OCI-LY7 (cell line): ENCODE measurements at regions of chr15 and their contacts with region 1.

Region 1: DNA sequence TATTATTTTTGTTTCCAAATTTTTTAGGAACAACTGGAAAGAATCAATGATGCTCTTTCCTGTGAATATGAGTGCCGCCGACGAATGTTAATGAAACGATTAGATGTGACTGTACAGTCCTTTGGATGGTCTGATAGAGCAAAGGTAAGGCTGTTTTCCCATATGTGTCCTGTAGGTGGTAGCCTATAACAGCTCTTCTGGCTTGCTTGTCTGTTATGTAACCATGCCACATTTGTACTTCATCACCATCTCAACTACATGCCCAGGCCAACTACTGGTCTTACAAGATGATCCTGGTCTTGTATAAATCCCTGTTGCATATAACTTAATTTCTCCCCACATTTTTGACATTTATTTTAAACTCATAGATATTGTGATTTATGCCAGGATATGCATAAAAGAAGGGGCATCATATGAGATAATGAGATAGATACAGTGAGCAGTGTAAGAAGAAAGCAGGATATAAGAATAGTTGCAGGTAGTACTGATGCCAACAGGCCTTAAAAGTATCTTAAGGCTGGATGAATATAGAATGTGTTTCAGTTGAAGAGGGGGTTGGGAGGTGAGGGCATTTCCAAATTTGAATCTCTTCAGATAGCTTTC is 20.3 kb downstream of the FAM98B start:
- DNase-seq: peak; percentile 72
- H3K4me3 ChIP-seq: no peak overlapping the region
- H3K27ac ChIP-seq: no peak overlapping the region
- H3K4me1 ChIP-seq: no peaks in the 10 kb centered on the region
- CTCF ChIP-seq: peak; percentile 86

Region 2: DNA sequence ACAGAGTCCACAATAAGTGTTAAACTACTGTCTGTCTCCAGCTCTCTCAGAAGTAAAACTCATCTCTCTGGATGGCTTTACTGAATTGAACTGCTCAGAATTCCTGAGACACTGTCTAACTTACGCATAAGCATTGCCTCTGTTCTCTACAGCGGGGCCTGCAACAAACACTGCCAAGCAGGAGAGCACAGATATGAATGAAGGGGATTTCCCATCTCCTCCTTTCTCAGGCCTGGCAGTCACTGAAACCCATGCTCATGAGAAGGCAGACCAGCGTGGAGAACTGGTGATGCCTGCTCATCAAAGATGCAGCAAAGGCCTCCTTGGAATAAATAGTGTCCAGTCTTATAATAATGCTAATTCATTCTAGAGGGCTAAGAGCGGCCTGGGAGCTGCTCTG is 80.1 kb after region 1 on chr15:
- CTCF ChIA-PET with region 1: no interaction called
- POLR2A ChIA-PET with region 1: no interaction called
- intact Hi-C with region 1: loop called (anchors 5 kb)
- DNase-seq: no peak
- H3K4me3 ChIP-seq: no peak overlapping the region
- H3K27ac ChIP-seq: no peak overlapping the region
- H3K4me1 ChIP-seq: no peaks in the 10 kb centered on the region
- CTCF ChIP-seq: no peak

Region 3: GRCh38 chr15:38589502-38589901 is 115.2 kb after region 1 on chr15:
- CTCF ChIA-PET with region 1: no interaction called
- POLR2A ChIA-PET with region 1: no interaction called
- intact Hi-C with region 1: no loop called
- DNase-seq: no peak
- H3K4me3 ChIP-seq: no peak overlapping the region
- H3K27ac ChIP-seq: no peak overlapping the region
- H3K4me1 ChIP-seq: no peaks in the 10 kb centered on the region
- CTCF ChIP-seq: no peak

Region 4: GRCh38 chr15:38683382-38684242 is 209.4 kb after region 1 on chr15:
- CTCF ChIA-PET with region 1: no interaction called
- POLR2A ChIA-PET with region 1: interaction called, 3 read pairs
- intact Hi-C with region 1: loop called (anchors 1 kb)
- DNase-seq: peak; percentile 85
- H3K4me3 ChIP-seq: no peak overlapping the region
- H3K27ac ChIP-seq: no peak overlapping the region
- H3K4me1 ChIP-seq: peaks cover 18% of the 10 kb centered on the region
- CTCF ChIP-seq: peak; percentile 99